Ovary (tissue), 10 donors: ENCODE measurements at regions of chr11 and their contacts with region 1.

Region 1: GRCh38 chr11:11135820-11136465 is 217.1 kb downstream of the CSNK2A3 start:
- DNase-seq: no peak
- H3K4me3 ChIP-seq: no peak overlapping the region
- H3K27ac ChIP-seq: no peak overlapping the region
- H3K4me1 ChIP-seq: peaks cover 2% of the 10 kb centered on the region
- H3K27me3 ChIP-seq: no peaks in the 10 kb centered on the region
- CTCF ChIP-seq: no peak
- EP300 ChIP-seq: no peak
- POLR2A ChIP-seq: no peak

Region 2: GRCh38 chr11:10208131-10208575 is 927.8 kb before region 1 on chr11:
- intact Hi-C with region 1: loop called in 1 of 4 experiments (anchors 5 kb)
- DNase-seq: no peak
- H3K4me3 ChIP-seq: no peak overlapping the region
- H3K27ac ChIP-seq: no peak overlapping the region
- H3K4me1 ChIP-seq: peaks cover 2% of the 10 kb centered on the region
- H3K27me3 ChIP-seq: no peaks in the 10 kb centered on the region
- CTCF ChIP-seq: peak; percentile 39 to 75 (median 60)
- EP300 ChIP-seq: no peak
- POLR2A ChIP-seq: no peak

Region 3: DNA sequence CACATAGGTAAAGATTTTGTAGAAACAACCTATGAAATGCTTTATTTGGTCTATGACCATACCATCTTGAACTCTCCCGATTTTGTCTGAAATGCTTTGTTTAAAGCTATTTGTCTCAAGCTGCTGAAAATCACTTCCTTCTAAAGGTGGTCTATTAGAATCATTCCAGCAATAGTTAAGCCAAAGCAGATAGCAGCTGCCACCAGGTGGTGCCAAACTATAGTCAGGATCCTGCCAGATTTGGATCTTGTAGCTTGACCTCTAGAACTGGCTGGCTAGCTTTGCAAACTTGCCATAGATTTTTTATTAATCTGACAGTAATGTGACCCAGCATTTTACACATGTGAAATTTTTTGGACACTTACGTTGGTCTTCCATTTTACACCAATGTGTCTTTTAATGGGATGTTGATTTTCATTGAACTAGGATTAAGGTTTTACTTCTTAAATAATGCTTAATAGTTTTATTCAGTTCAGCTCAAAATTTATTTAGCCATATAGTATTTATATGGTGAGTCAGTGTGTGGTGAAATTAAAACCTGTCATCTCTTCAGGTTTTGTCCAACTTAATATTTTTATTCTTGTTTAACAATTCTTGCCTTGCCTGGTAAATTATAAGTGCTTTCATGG is 365.2 kb before region 1 on chr11:
- intact Hi-C with region 1: no loop called
- DNase-seq: no peak
- H3K4me3 ChIP-seq: no peak overlapping the region
- H3K27ac ChIP-seq: no peak overlapping the region
- H3K4me1 ChIP-seq: no peaks in the 10 kb centered on the region
- H3K27me3 ChIP-seq: no peaks in the 10 kb centered on the region
- CTCF ChIP-seq: no peak
- EP300 ChIP-seq: no peak
- POLR2A ChIP-seq: no peak

Region 4: GRCh38 chr11:10808553-10809372 is 327.2 kb before region 1 on chr11 and contains the start of gene EIF4G2:
- intact Hi-C with region 1: no loop called
- DNase-seq: peak; percentile 98
- H3K4me3 ChIP-seq: peak within 1 kb of the TSS; percentile 99
- H3K27ac ChIP-seq: peak within 1 kb of the TSS; percentile 94 to 96
- H3K4me1 ChIP-seq: peaks cover 5% of the 10 kb centered on the region
- H3K27me3 ChIP-seq: no peaks in the 10 kb centered on the region
- CTCF ChIP-seq: peak in 1 of 3 donors; percentile 11
- EP300 ChIP-seq: no peak
- POLR2A ChIP-seq: peak; percentile 98
- total RNA-seq, gene EIF4G2: 206 to 761 (median 582) TPM